ENCODE measurements at regions of chr16 and their contacts with region 1.

Region 1: GRCh38 chr16:72927199-72928089 is 120.5 kb downstream of the ZFHX3 start:
- DNase-seq: peak; percentile 71
- H3K4me3 ChIP-seq: 0 out of 2 replicates have a peak overlapping the region, but pooled peaks have one; percentile 1
- CTCF ChIP-seq: peak; percentile 7

Region 2: DNA sequence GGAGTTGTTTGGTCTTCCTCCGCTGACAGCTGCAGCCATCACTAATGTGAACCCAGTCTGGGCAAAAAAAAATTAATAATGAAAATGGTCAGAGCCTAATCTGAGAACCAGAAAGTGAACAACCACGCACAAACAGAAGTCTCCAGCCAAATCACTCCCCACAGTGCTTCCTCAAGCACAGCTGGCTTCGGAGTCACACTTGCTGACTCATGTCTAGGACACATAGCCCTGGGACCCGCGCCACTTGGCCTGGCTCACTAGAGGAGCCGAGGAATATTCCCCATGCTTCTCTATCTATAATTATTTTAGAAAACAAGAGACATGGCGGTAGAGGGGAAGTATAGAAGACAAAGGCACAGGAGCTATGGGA is 11.3 kb after region 1 on chr16:
- CTCF ChIA-PET with region 1: interaction called, 12 read pairs
- POLR2A ChIA-PET with region 1: no interaction called
- DNase-seq: no peak
- H3K4me3 ChIP-seq: no peak overlapping the region
- CTCF ChIP-seq: no peak

Region 3: GRCh38 chr16:73036074-73036826 is 108.8 kb after region 1 on chr16:
- CTCF ChIA-PET with region 1: no interaction called
- POLR2A ChIA-PET with region 1: no interaction called
- DNase-seq: no peak
- H3K4me3 ChIP-seq: no peak overlapping the region
- CTCF ChIP-seq: no peak

Measured in AG04449 (cell line).